ENCODE measurements at regions of chr3 and their contacts with region 1.

Region 1: DNA sequence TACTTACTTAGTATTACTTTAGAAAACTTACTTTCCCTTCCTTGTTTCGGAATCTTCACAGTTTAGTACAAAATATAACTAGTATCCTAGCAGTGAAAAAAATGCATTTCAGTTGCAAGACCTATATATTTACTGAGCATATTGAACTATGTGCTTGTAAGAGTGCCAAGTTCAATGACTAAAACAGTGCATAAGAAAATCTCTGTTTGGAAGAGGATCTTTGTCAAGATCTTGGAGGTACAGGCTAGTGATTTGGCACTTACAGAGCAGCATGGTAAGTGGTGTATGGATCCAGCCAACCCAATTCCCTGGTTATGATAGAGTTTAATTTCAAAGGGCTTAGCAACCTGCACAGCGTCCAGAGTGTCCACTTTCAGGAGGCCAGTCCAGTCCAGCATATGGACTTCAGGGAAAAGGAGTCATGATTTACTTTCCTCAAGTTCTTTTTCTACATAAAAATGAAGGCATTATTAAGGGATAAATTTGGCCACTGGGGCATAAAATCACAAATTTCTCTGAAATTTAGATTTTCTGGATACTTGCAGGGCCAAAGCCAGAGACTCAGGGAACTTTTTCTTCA is 625.8 kb upstream of the BCHE start:
- DNase-seq: peak; percentile 61
- ATAC-seq: peak; percentile 79
- H3K4me3 ChIP-seq: no peak overlapping the region
- H3K27ac ChIP-seq: no peak overlapping the region
- H3K4me1 ChIP-seq: peaks cover 27% of the 10 kb centered on the region
- H3K27me3 ChIP-seq: no peaks in the 10 kb centered on the region
- CTCF ChIP-seq: no peak

Region 2: DNA sequence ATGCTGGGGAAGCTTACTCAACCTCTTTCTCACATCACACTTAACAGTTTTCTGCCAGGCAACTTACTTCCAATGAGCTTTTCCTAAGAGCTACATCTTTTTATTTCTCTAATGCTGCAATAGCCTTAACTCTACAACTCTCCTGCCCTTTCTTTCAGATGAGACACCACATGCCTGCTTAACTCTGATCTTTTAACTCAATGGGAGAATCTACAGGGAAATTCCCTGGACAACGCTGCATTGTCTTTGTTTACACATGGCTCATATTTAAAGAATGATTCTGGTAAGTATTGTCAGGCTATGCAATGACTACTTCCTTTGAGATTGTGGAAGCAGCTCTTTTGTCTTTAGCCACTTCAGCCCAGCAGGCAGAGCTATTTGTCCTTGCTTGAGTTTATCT is 272.6 kb before region 1 on chr3:
- CTCF ChIA-PET with region 1: no interaction called
- POLR2A ChIA-PET with region 1: no interaction called
- intact Hi-C with region 1: loop called (anchors 1 kb)
- DNase-seq: peak; percentile 77
- ATAC-seq: peak; percentile 90
- H3K4me3 ChIP-seq: no peak overlapping the region
- H3K27ac ChIP-seq: peak overlapping the region; percentile 54
- H3K4me1 ChIP-seq: peaks cover 19% of the 10 kb centered on the region
- H3K27me3 ChIP-seq: no peaks in the 10 kb centered on the region
- CTCF ChIP-seq: peak; percentile 35; the same call in 1 of the 2 replicates

Region 3: DNA sequence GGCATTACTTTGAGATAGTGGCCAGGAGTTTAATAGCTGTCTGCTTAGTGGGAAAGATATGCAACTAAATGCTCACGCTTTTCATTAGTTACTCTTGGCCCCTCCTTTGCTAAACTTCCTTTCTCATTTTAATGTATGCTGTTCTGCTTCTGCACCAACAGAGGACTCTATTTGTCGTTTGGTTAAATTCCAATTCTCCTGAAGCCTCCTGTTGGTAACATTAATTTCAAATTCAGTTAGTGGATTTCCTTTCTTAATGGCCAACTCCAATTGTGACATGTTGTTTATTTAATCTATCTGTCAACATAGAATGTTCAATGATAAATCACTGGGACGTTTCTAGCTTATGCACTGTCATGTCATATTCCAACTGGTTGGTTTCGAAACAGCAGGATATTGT is 158.4 kb before region 1 on chr3:
- CTCF ChIA-PET with region 1: no interaction called
- POLR2A ChIA-PET with region 1: no interaction called
- intact Hi-C with region 1: loop called (anchors 10 kb)
- DNase-seq: peak; percentile 67
- ATAC-seq: peak; percentile 52
- H3K4me3 ChIP-seq: no peak overlapping the region
- H3K27ac ChIP-seq: no peak overlapping the region
- H3K4me1 ChIP-seq: peaks cover 22% of the 10 kb centered on the region
- H3K27me3 ChIP-seq: no peaks in the 10 kb centered on the region
- CTCF ChIP-seq: peak; percentile 55

Region 4: GRCh38 chr3:166722099-166722498 is 259.1 kb after region 1 on chr3:
- CTCF ChIA-PET with region 1: no interaction called
- POLR2A ChIA-PET with region 1: no interaction called
- intact Hi-C with region 1: no loop called
- DNase-seq: no peak
- ATAC-seq: peak; percentile 42; the same call in 1 of the 2 replicates
- H3K4me3 ChIP-seq: no peak overlapping the region
- H3K27ac ChIP-seq: no peak overlapping the region
- H3K4me1 ChIP-seq: no peaks in the 10 kb centered on the region
- H3K27me3 ChIP-seq: no peaks in the 10 kb centered on the region
- CTCF ChIP-seq: peak; percentile 39; the same call in 1 of the 2 replicates

Measured in PC-3 (cell line).